Activated T-helper 2 cell treated with anti-CD3 and anti-CD28 coated beads, Interferon-gamma antibody, Interleukin-2, Interleukin-4, amounts not matched to agents 10 μg/mL and 5 μg/mL and 100 μg/mL, durations not matched to agents 14 hours and 24 hours and 36 hours (primary cell): ENCODE measurements at regions of chr15 and their contacts with region 1.

Region 1: DNA sequence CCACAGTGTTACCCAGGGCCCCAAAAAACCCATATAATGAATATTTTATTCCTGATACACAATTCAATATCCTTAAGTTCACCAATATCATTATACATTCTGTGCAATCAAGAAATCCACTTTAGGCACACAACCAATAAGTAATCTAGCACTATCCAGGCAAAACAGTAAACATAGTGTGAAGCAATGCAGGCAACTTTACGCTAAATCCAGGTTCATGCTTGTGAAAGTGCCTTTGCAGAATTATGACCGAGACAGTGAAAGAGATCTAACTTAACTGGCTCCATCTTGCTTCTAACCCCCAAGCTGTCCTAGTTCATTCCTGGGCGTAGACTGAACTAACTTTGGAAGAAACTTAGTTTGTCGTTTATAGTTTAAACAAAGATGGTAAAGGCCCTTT is 34.2 kb upstream of the INO80 start:
- DNase-seq: no peak
- H3K4me3 Mint-ChIP-seq: no peak overlapping the region
- H3K27ac Mint-ChIP-seq: no peak overlapping the region
- H3K4me1 Mint-ChIP-seq: peaks cover 28% of the 10 kb centered on the region
- H3K27me3 Mint-ChIP-seq: peaks cover 8% of the 10 kb centered on the region

Region 2: DNA sequence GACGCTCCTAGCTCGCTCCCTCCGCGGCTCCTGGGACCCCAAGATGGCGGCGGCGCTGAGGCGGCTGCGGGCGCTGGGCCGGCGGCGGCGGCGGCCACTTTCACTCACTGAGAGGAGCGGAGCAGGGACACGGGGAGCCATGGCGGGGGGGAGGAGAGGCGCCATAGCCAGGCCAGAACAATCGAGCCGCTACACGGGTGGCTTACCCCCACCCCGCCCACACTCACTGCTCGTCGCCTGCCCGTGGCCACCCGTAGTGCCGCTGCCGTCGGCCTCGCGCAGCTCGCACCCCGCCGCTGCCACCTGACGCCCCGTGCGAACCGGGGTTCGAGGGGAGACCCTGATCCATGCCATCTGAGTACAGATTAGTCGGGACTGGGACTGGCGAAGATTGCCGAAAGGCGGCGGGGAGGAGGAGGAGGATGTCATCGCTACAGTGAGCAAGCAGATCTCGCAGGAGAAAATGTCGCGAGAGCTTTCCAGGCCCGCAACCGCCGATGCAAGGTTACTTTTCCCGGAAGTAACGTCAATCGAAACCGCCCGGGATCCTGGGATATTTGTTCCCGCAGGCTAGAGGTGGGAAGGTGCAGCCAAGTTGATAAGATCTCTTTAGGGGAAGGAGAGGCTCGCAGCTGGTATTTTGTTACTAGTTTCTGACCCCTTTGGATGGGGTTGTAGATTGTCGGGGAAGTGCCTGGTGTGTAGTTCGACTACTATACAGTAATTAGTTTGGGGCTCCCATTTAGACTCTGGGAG is 34.0 kb before region 1 on chr15 and contains the start of gene INO80:
- intact Hi-C with region 1: loop called (anchors 1 kb)
- DNase-seq: peak; percentile 96
- H3K4me3 Mint-ChIP-seq: peak within 1 kb of the TSS; percentile 97
- H3K27ac Mint-ChIP-seq: peak within 1 kb of the TSS; percentile 99
- H3K4me1 Mint-ChIP-seq: peaks cover 8% of the 10 kb centered on the region
- H3K27me3 Mint-ChIP-seq: no peaks in the 10 kb centered on the region
- total RNA-seq, gene INO80: 33.2 and 35.2 TPM in 2 replicates